Psoas muscle (tissue), 8 donors: ENCODE measurements at regions of chr3 and their contacts with region 1.

Region 1: GRCh38 chr3:14319654-14320182 is 82.7 kb upstream of the SLC6A6 start:
- DNase-seq: no peak
- ATAC-seq: peak in 2 of 4 donors; percentile 19 to 22
- H3K4me3 ChIP-seq: no peak overlapping the region
- H3K27ac ChIP-seq: peak overlapping the region; percentile 97
- H3K4me1 ChIP-seq: peaks cover 23% of the 10 kb centered on the region
- H3K27me3 ChIP-seq: no peaks in the 10 kb centered on the region
- CTCF ChIP-seq: no peak

Region 2: DNA sequence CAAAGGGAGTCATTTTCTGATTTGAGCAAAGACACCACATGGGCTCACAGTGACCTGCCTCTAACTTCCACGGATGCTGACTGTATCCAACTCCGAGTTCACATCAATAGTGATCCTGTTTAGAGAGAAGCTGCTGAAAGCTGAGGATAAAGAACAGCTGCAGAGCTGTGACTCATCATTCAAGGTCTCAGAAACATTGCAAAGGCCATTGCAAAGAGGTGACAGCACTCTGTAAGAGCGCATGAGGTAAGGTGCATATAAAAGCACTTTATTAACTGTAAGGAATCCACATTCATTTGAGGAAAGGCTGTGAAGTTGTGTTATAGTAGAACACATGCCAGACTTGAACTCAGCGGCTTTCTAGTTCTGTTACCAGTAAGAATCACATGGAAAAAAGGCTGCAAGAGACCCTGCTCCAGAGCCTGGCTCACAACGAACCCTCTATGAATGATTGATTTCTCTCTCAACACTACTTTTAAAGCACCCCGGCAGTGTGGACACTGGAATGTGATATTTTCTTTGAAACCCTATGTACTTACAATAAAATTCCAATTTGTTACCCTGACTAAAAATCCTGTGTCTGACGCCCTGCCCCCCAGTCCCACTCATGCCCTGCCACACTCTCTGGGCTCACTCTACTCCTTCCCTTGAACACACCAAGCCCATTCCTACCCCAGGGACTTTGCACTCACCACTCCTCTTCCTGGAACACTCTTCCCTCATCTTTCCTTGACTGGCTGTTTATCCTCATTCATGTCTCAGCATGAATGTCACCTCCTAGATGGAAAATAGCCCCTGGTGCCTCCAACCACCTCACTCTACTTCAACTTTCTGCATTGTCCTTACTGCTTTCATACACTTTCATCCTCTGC is 29.9 kb before region 1 on chr3:
- intact Hi-C with region 1: loop called in 1 of 2 experiments (anchors 1 kb)
- DNase-seq: no peak
- ATAC-seq: peak; percentile 87 to 90 (median 88)
- H3K4me3 ChIP-seq: no peak overlapping the region
- H3K27ac ChIP-seq: peak overlapping the region; percentile 90
- H3K4me1 ChIP-seq: peaks cover 56% of the 10 kb centered on the region
- H3K27me3 ChIP-seq: no peaks in the 10 kb centered on the region
- CTCF ChIP-seq: no peak

Region 3: DNA sequence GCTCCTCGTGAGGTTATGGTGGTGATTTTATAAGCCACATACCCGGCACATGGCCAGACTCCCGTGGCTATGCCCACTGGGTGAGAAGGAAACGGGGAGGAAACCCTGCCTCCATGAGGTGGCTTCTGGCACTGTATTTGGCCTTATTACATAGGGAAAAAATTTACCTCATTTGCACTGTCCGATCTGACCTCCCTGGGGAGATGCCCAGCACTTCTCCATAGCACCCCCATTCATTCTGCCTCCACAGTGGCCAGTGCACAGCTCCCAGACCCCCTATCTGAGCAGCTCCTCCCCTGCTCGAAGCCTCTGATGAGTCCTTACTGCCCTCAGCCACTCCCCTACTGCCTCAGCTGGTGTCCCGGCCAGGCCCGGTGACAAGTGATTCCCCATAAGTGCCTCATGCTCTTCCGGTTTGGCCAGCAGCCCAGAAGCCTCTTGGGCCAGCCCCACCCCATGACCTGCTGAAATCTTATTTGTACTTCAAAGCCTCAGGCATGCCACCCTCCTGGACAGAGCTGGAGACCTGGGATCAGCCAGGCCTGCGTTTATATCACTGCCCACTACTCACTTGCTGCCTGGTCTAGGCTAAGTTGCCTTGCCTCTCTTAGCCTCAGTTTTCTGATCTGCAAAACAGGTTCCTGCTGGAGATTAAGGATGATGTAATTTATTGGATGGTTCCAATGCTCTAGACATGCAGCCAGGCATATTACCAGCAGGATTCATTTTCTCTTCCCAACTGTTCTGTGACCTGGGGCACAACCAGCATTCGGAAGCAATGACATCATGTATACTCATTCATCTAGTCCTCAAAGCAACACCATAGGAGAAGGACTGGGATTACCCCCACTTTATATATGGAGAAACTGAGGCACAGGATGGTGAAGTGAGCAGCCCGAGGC is 52.1 kb after region 1 on chr3:
- intact Hi-C with region 1: loop called in 1 of 2 experiments (anchors 2 kb)
- DNase-seq: peak; percentile 89 to 95
- ATAC-seq: peak; percentile 75 to 88 (median 84)
- H3K4me3 ChIP-seq: no peak overlapping the region
- H3K27ac ChIP-seq: peak overlapping the region; percentile 95
- H3K4me1 ChIP-seq: peaks cover 62% of the 10 kb centered on the region
- H3K27me3 ChIP-seq: no peaks in the 10 kb centered on the region
- CTCF ChIP-seq: no peak

Region 4: GRCh38 chr3:14391033-14391432 is 71.3 kb after region 1 on chr3:
- intact Hi-C with region 1: loop called in 1 of 2 experiments (anchors 5 kb)
- DNase-seq: peak; percentile 75 to 87
- ATAC-seq: peak; percentile 87 to 92 (median 90)
- H3K4me3 ChIP-seq: no peak overlapping the region
- H3K27ac ChIP-seq: peak overlapping the region; percentile 95
- H3K4me1 ChIP-seq: peaks cover 35% of the 10 kb centered on the region
- H3K27me3 ChIP-seq: no peaks in the 10 kb centered on the region
- CTCF ChIP-seq: no peak

Region 5: DNA sequence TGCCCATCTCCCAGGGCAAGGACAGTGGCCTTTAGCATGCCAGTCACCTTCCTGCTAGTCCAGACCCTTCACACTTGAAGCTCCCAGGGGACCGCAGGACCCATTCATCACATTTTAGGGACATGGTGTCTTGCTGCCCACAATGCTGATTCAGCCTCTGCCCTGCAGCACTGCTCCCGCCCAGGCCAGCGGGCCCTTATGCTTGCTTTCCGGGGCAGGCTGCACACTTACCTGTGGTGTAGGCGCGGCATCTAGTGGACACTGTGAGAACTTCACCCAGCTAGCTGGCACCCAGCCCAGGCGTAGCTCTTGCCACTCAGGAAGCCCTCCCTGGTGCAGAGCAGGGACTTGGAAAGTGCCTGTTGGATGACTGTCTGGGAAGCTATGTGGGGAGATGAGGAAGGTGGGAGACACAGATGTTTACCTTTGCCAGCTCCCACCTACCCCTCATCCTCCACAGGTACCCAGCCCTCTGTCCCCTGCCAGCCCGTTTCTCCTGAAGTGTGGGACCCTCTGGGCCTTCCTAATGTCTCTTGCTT is 601.4 kb after region 1 on chr3:
- intact Hi-C with region 1: no loop called
- DNase-seq: peak; percentile 85 to 92
- ATAC-seq: peak; percentile 91 to 97 (median 94)
- H3K4me3 ChIP-seq: no peak overlapping the region
- H3K27ac ChIP-seq: no peak overlapping the region
- H3K4me1 ChIP-seq: no peaks in the 10 kb centered on the region
- H3K27me3 ChIP-seq: no peaks in the 10 kb centered on the region
- CTCF ChIP-seq: peak; percentile 99